ENCODE measurements at regions of chr5 and their contacts with region 1.

Region 1: GRCh38 chr5:66587771-66588170 is 8.4 kb upstream of the MAST4 start:
- DNase-seq: no peak
- ATAC-seq: no peak
- H3K4me3 Mint-ChIP-seq: no peak overlapping the region
- H3K27ac Mint-ChIP-seq: no peak overlapping the region
- H3K4me1 Mint-ChIP-seq: no peaks in the 10 kb centered on the region
- H3K27me3 Mint-ChIP-seq: peaks cover 23% of the 10 kb centered on the region
- CTCF ChIP-seq: no peak

Region 2: GRCh38 chr5:66565878-66566277 is 21.9 kb before region 1 on chr5:
- CTCF ChIA-PET with region 1: no interaction called
- POLR2A ChIA-PET with region 1: no interaction called
- intact Hi-C with region 1: loop called (anchors 1 kb)
- DNase-seq: no peak
- ATAC-seq: no peak
- H3K4me3 Mint-ChIP-seq: no peak overlapping the region
- H3K27ac Mint-ChIP-seq: no peak overlapping the region
- H3K4me1 Mint-ChIP-seq: no peaks in the 10 kb centered on the region
- H3K27me3 Mint-ChIP-seq: no peaks in the 10 kb centered on the region
- CTCF ChIP-seq: no peak